ENCODE measurements at regions of chr1 and their contacts with region 1.

Region 1: GRCh38 chr1:209860293-209860881 is 32.6 kb downstream of the UTP25 start:
- DNase-seq: peak; percentile 66
- H3K4me3 ChIP-seq: no peak overlapping the region
- H3K27ac ChIP-seq: peak overlapping the region; percentile 14
- H3K4me1 ChIP-seq: peaks cover 30% of the 10 kb centered on the region
- H3K27me3 ChIP-seq: no peaks in the 10 kb centered on the region
- CTCF ChIP-seq: peak; percentile 91 to 92

Region 2: DNA sequence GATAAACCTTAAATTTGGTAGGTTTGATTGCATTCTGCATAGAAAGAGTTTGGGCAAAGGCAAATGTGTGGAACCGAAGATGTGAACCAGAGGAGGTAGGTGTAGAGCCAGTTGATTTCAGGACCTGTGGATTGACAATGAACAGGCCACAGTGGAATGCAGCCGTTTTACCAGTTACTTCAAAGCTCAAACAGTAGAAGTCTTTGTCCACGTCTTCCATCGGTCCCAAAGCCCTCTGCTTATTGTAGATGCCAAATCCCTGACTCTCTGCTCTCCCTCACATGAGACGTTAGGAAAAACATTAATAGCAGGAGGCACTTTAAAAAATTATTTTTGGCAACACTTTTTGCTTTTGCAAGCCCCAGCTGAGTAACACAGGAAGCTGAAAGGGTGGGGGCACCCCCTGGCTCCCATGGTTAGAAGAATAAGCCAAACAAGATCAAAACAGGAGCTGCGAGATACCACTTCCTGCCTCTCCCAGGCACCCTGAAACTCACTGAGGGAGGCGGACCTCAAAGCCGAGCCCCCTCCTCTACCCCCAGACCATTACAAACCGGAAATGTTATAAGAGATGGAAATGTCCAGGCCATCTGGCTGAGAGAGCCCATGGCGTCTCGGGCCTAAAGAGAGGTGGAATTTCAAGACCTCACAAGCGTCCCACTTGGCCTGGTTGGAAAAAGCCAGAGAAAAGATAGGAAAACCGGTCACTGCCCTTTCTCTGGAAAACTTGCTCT is 91.0 kb before region 1 on chr1:
- CTCF ChIA-PET with region 1: no interaction called
- dilution Hi-C with region 1: no loop called
- in situ Hi-C with region 1: no loop called
- intact Hi-C with region 1: no loop called
- DNase-seq: peak; percentile 89
- H3K4me3 ChIP-seq: no peak overlapping the region
- H3K27ac ChIP-seq: peak overlapping the region; percentile 87
- H3K4me1 ChIP-seq: peaks cover 32% of the 10 kb centered on the region
- H3K27me3 ChIP-seq: no peaks in the 10 kb centered on the region
- CTCF ChIP-seq: no peak

Region 3: DNA sequence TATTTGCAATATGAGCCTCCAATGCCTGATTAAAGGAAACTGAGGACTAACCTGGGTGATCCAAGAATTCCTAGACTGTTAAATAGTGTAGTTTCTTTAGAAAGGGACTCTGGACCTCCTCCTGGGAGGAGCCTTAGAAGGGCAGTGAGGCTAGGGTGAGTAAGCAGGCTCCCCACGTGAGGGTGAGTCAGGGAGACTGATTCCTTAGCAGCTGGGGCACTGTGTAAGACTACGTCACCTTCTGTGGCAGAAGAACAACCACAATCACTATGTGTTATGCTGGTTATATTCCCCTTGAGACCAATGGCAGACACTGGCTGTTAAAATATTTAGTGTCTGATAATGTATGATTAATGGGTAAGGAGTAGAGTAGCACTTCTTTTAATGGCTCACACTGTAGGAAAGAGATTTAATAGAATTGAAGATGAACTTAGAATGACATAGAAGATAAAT is 24.3 kb after region 1 on chr1:
- CTCF ChIA-PET with region 1: no interaction called
- dilution Hi-C with region 1: no loop called
- in situ Hi-C with region 1: no loop called
- intact Hi-C with region 1: loop called (anchors 1 kb)
- DNase-seq: peak; percentile 99
- H3K4me3 ChIP-seq: no peak overlapping the region
- H3K27ac ChIP-seq: peak overlapping the region; percentile 96
- H3K4me1 ChIP-seq: peaks cover 39% of the 10 kb centered on the region
- H3K27me3 ChIP-seq: no peaks in the 10 kb centered on the region
- CTCF ChIP-seq: no peak

Region 4: GRCh38 chr1:209899948-209900347 is 39.6 kb after region 1 on chr1:
- CTCF ChIA-PET with region 1: no interaction called
- dilution Hi-C with region 1: no loop called
- in situ Hi-C with region 1: no loop called
- intact Hi-C with region 1: loop called (anchors 2 kb)
- DNase-seq: no peak
- H3K4me3 ChIP-seq: no peak overlapping the region
- H3K27ac ChIP-seq: peak overlapping the region; percentile 96
- H3K4me1 ChIP-seq: peaks cover 44% of the 10 kb centered on the region
- H3K27me3 ChIP-seq: no peaks in the 10 kb centered on the region
- CTCF ChIP-seq: peak; percentile 44 to 51

Region 5: GRCh38 chr1:209937996-209938959 is 77.9 kb after region 1 on chr1 and contains the start of gene SYT14:
- CTCF ChIA-PET with region 1: no interaction called
- dilution Hi-C with region 1: no loop called
- in situ Hi-C with region 1: no loop called
- intact Hi-C with region 1: loop called (anchors 1 kb)
- DNase-seq: peak; percentile 76
- H3K4me3 ChIP-seq: peak within 1 kb of the TSS; percentile 71 to 87 (median 82)
- H3K27ac ChIP-seq: peak within 1 kb of the TSS; percentile 70
- H3K4me1 ChIP-seq: peaks cover 5% of the 10 kb centered on the region
- H3K27me3 ChIP-seq: no peaks in the 10 kb centered on the region
- CTCF ChIP-seq: peak in 1 of 2 donors; percentile 32
- total RNA-seq, gene SYT14: 5.8 to 13.4 TPM

Region 6: DNA sequence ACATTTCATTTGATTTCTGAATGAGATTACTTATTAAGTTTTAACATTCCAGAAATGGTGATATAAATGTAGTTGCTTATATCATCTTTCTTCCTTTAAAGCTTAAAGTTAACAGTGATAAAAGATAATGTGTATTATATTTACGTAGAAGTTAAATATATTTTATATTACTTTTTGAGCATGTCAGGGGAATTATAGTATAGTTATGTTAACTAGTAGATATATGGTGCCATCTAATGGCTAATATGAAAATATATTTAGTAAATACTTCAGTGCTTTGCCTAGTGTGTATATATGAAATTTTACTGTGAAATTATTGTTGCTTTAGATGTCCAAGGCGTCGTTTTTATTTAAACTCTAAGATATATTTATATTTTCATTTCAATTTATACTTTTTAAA is 129.1 kb after region 1 on chr1:
- CTCF ChIA-PET with region 1: no interaction called
- dilution Hi-C with region 1: no loop called
- in situ Hi-C with region 1: loop called in 1 of 2 experiments (anchors 5 kb)
- intact Hi-C with region 1: loop called (anchors 1 kb)
- DNase-seq: peak; percentile 11
- H3K4me3 ChIP-seq: no peak overlapping the region
- H3K27ac ChIP-seq: no peak overlapping the region
- H3K4me1 ChIP-seq: peaks cover 5% of the 10 kb centered on the region
- H3K27me3 ChIP-seq: no peaks in the 10 kb centered on the region
- CTCF ChIP-seq: peak; percentile 18 to 34

Region 7: GRCh38 chr1:210143465-210144062 is 283.2 kb after region 1 on chr1:
- CTCF ChIA-PET with region 1: no interaction called
- dilution Hi-C with region 1: no loop called
- in situ Hi-C with region 1: no loop called
- intact Hi-C with region 1: loop called (anchors 2 kb)
- DNase-seq: peak; percentile 51
- H3K4me3 ChIP-seq: no peak overlapping the region
- H3K27ac ChIP-seq: no peak overlapping the region
- H3K4me1 ChIP-seq: peaks cover 17% of the 10 kb centered on the region
- H3K27me3 ChIP-seq: no peaks in the 10 kb centered on the region
- CTCF ChIP-seq: peak; percentile 62

Region 8: GRCh38 chr1:210301615-210302000 is 441.2 kb after region 1 on chr1:
- CTCF ChIA-PET with region 1: no interaction called
- dilution Hi-C with region 1: no loop called
- in situ Hi-C with region 1: loop called in 1 of 2 experiments (anchors 25 kb)
- intact Hi-C with region 1: no loop called
- DNase-seq: no peak
- H3K4me3 ChIP-seq: no peak overlapping the region
- H3K27ac ChIP-seq: no peak overlapping the region
- H3K4me1 ChIP-seq: peaks cover 11% of the 10 kb centered on the region
- H3K27me3 ChIP-seq: no peaks in the 10 kb centered on the region
- CTCF ChIP-seq: no peak

Measured in mammary epithelial cell (primary cell).